ENCODE measurements at regions of chr12 and their contacts with region 1.

Region 1: GRCh38 chr12:10613349-10614055 is at the start of gene MAGOHB:
- DNase-seq: peak; percentile 95 to 97 (median 97)
- H3K4me3 ChIP-seq: peak within 1 kb of the TSS; percentile 83 to 97 (median 91)
- H3K4me3 Mint-ChIP-seq: peak within 1 kb of the TSS; percentile 96 to 99
- H3K27ac ChIP-seq: peak within 1 kb of the TSS; percentile 67 to 92
- H3K27ac Mint-ChIP-seq: peak within 1 kb of the TSS; percentile 95 to 100 (median 98)
- H3K4me1 ChIP-seq: peaks cover 10 to 18% of the 10 kb centered on the region in 2 donors
- H3K4me1 Mint-ChIP-seq: peaks cover 15% of the 10 kb centered on the region
- H3K27me3 ChIP-seq: no peaks in the 10 kb centered on the region
- H3K27me3 Mint-ChIP-seq: peaks cover 1 to 2% (median 1%) of the 10 kb centered on the region in 3 donors
- CTCF ChIP-seq: no peak
- polyA plus RNA-seq, gene MAGOHB: 6.9 to 23.5 (median 19.5) TPM

Region 2: DNA sequence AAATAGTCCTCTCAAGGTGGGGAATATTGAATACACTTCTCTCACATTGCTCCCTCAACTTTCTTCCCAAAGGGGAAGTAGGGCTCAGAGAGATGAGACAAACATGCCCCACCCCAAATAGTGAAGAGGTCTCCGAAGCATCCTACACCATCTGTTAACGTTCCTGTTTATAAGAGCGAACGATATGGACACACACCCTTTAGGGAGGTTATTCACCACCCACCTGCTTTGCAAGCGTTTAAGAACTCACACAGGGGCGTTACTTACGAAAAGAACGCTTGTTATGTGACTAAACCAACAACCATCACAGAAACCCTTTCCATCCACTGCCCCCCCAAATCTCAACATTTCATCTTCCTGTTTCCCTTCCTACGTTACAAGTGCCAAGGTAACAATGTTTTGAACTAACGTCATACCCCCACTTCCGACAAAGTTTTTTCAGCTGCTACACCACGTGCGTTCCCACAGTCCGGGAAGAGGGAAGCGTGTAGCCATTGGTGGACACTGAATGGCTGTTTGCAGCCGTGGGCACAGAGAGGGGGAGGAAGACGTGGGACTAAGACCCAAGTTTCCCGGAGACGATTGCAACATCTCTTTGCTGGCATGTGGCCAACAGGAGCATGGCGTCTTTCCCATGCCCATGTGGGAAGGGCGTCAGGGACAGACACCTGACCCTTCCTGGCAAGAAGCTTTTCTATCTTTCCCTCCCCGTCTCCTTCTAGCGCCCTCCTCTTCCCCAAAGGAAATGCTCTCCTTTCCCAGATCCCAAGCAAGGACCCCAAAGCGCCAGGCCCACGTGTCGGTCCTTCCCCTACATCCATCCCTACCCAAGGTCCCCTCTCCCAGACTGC is 108.4 kb after region 1 on chr12:
- intact Hi-C with region 1: loop called in 1 of 2 experiments (anchors 10 kb)
- DNase-seq: peak; percentile 86 to 96 (median 91)
- H3K4me3 ChIP-seq: peak overlapping the region; percentile 80 to 87 (median 81)
- H3K4me3 Mint-ChIP-seq: peak overlapping the region; percentile 100
- H3K27ac ChIP-seq: peak overlapping the region; percentile 84 to 91
- H3K27ac Mint-ChIP-seq: peak overlapping the region; percentile 94 to 100 (median 98)
- H3K4me1 ChIP-seq: peaks cover 17 to 29% of the 10 kb centered on the region in 2 donors
- H3K4me1 Mint-ChIP-seq: peaks cover 39% of the 10 kb centered on the region
- H3K27me3 ChIP-seq: peaks cover 10 to 12% of the 10 kb centered on the region in 2 donors
- H3K27me3 Mint-ChIP-seq: peaks cover 16 to 23% (median 22%) of the 10 kb centered on the region in 3 donors
- CTCF ChIP-seq: no peak

Measured in CD14-positive monocyte (primary cell).